Endothelial cell of umbilical vein (primary cell): ENCODE measurements at regions of chr6 and their contacts with region 1.

Region 1: DNA sequence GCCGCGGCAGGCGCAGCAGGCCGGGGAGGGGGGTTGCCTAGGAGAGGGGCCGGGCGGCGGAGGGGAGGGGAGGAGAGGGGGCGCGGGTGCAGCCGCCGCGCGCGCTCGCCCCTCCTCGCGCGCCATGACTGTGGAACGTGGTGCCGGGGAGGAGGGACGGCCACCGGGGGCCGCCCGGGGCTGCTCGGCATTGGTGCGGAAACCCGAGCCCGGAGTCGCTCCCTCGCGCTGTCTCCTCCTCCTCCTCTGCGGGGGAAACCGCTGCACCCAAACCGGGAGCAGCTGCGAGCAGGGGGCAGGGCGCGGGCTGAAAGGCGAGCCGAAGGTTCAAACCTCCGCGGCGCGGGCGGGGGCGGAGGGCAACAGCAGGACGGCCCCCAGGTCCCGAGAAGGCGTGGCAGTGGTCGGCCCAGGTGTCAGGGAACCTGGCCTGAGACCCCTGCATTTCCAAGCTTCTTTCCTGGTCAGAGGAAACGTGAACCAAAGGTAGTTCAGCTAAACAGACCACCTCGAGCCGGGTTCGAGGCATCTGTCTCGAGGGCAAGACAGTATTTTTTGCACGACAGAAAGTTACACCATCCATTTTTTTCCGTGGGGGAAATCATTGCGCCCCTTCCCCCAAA is 1.4 kb upstream of the TRERF1 start:
- DNase-seq: peak; percentile 52
- H3K4me3 ChIP-seq: peak overlapping the region; percentile 49 to 73 (median 51)
- H3K27ac ChIP-seq: no peak overlapping the region
- H3K4me1 ChIP-seq: peaks cover 9% of the 10 kb centered on the region
- H3K27me3 ChIP-seq: peaks cover 11 to 37% of the 10 kb centered on the region in 2 experiments
- CTCF ChIP-seq: no peak
- POLR2A ChIP-seq: no peak

Region 2: GRCh38 chr6:42260972-42261371 is 192.2 kb before region 1 on chr6:
- CTCF ChIA-PET with region 1: interaction called, 3 read pairs
- POLR2A ChIA-PET with region 1: no interaction called
- dilution Hi-C with region 1: no loop called
- intact Hi-C with region 1: loop called (anchors 5 kb)
- DNase-seq: no peak
- H3K4me3 ChIP-seq: no peak overlapping the region
- H3K27ac ChIP-seq: no peak overlapping the region
- H3K4me1 ChIP-seq: peaks cover 12% of the 10 kb centered on the region
- H3K27me3 ChIP-seq: peaks cover 0 to 3% of the 10 kb centered on the region in 2 experiments
- CTCF ChIP-seq: peak; percentile 27 to 56
- POLR2A ChIP-seq: no peak